ENCODE measurements at regions of chr9 and their contacts with region 1.

Region 1: GRCh38 chr9:131720330-131720729 is 19.5 kb downstream of the RAPGEF1 start:
- DNase-seq: no peak
- H3K4me3 Mint-ChIP-seq: peak overlapping the region; percentile 47
- H3K27ac Mint-ChIP-seq: peak overlapping the region; percentile 84
- H3K4me1 Mint-ChIP-seq: peaks cover 88% of the 10 kb centered on the region
- H3K27me3 Mint-ChIP-seq: no peaks in the 10 kb centered on the region

Region 2: DNA sequence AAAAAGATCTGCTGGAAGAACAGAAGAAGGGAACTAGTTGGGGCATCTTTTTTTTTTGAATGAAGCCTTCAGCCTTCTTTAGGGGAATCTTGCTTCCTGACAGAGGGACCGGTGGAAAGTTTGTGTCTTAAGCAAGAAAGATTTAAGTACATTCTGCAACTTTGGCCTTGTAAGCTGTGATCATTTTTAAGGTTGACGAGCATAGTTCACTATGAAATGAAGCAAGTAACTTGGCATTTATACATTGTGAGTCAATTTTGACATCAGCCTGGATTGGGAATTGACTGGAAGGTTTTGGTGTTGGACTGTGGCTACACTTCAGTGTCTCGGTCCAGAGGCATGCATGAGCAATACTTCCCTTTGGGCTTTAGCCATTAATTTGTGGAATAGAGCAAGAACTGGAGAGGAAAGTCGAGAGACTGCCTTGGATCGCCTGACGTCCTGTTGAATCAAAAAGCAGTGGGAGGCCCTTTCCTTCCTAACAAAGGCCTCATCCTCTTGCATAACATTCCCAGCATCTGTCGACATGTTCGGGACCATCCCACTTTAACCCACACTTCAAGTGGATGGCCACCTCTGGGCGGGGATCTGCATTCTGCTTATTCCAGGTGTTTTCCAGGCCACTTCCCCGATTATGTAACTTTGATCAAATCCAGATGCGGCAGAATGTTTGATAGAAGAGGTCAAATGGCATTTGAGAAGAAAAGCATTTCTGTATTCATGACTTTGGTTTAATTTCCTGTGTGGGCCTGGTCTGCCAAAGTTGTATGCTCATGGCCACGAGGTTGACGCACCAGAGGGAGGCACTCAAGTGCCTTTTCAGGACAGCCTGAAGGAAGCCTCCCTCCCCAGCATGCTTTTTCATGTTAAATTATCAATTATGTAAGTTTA is 872.8 kb before region 1 on chr9:
- intact Hi-C with region 1: no loop called
- DNase-seq: no peak
- H3K4me3 Mint-ChIP-seq: no peak overlapping the region
- H3K27ac Mint-ChIP-seq: no peak overlapping the region
- H3K4me1 Mint-ChIP-seq: peaks cover 11% of the 10 kb centered on the region
- H3K27me3 Mint-ChIP-seq: peaks cover 1% of the 10 kb centered on the region

Region 3: GRCh38 chr9:131709771-131710454 is 10.4 kb before region 1 on chr9:
- intact Hi-C with region 1: loop called (anchors 1 kb)
- DNase-seq: peak; percentile 44
- H3K4me3 Mint-ChIP-seq: peak overlapping the region; percentile 69
- H3K27ac Mint-ChIP-seq: peak overlapping the region; percentile 97
- H3K4me1 Mint-ChIP-seq: peaks cover 76% of the 10 kb centered on the region
- H3K27me3 Mint-ChIP-seq: no peaks in the 10 kb centered on the region

Region 4: DNA sequence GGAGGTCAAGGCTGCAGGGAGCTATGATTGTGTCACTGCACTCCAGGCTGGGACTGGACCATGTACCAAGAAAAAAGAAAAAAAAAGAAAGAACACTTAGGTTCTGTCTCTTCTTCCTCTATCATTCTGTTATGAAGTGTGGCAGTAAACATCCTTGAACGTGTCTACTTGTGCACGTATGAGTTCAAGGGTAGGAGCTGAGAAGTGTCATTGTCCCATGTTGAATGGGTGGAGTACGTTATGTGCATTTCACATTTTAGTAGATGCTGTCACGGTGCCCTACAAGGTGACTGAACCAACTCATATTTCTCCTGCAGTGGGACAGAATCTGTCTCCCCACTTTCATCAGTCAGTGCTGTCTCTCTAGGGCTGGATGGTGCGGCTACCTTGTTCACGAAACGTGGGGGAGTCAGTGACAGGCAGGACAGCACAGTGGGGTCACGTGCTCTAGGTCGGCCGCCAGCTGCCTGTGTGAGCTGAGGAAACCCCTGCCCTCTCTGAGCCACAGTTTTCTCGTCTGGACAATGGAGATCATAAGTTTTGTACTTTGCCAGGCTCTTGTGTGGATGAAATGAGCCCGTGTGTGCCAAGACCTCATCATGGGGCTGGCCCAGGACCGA is 997.1 kb after region 1 on chr9:
- intact Hi-C with region 1: no loop called
- DNase-seq: no peak
- H3K4me3 Mint-ChIP-seq: no peak overlapping the region
- H3K27ac Mint-ChIP-seq: no peak overlapping the region
- H3K4me1 Mint-ChIP-seq: no peaks in the 10 kb centered on the region
- H3K27me3 Mint-ChIP-seq: peaks cover 21% of the 10 kb centered on the region

Measured in activated T-helper 1 cell treated with anti-CD3 and anti-CD28 coated beads, Interleukin-12 subunit alpha, Interleukin-12 subunit beta, Interleukin-2, Interleukin-4 antibody, amounts not matched to agents 30 ng/mL and 10 ng/mL and 1 ng/mL, durations not matched to agents 14 hours and 24 hours and 36 hours (primary cell).